ENCODE measurements at regions of chr17 and their contacts with region 1.

Region 1: GRCh38 chr17:15038656-15039055 is 226.5 kb downstream of the PMP22 start:
- DNase-seq: peak in 1 of 2 donors; percentile 23
- H3K4me3 ChIP-seq: peak overlapping the region in 1 of 3 donors; percentile 8
- H3K27ac ChIP-seq: no peak overlapping the region
- H3K4me1 ChIP-seq: no peaks in the 10 kb centered on the region
- H3K27me3 ChIP-seq: no peaks in the 10 kb centered on the region
- CTCF ChIP-seq: no peak
- POLR2A ChIP-seq: no peak

Region 2: DNA sequence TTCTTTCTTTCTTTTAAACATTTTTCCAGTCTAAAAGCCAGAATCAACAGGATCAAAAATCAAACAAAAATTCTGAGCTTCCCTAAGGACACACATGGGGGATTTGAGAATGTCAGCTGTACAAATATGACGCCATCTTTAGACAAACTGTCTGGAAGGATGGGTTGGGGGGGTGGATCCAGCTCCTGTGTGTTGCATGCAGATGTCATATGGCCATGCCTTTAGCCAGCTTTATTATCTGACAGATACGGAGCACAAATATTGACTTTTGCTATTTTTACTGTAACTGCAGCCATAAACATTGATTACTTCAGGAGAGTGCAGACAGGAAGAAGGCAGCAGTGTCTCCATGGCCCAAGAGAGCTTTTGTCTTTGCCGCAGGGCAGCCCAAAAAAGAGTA is 1741.5 kb before region 1 on chr17:
- intact Hi-C with region 1: loop called (anchors 10 kb)
- DNase-seq: no peak
- H3K4me3 ChIP-seq: no peak overlapping the region
- H3K27ac ChIP-seq: no peak overlapping the region
- H3K4me1 ChIP-seq: no peaks in the 10 kb centered on the region
- H3K27me3 ChIP-seq: no peaks in the 10 kb centered on the region
- CTCF ChIP-seq: no peak
- POLR2A ChIP-seq: no peak

Region 3: GRCh38 chr17:15076991-15077663 is 38.5 kb after region 1 on chr17:
- intact Hi-C with region 1: no loop called
- DNase-seq: no peak
- H3K4me3 ChIP-seq: no peak overlapping the region
- H3K27ac ChIP-seq: no peak overlapping the region
- H3K4me1 ChIP-seq: no peaks in the 10 kb centered on the region
- H3K27me3 ChIP-seq: peaks cover 0 to 5% of the 10 kb centered on the region in 2 donors
- CTCF ChIP-seq: no peak
- POLR2A ChIP-seq: no peak

Measured in breast epithelium (tissue), 4 donors.